AG04449 (cell line): ENCODE measurements at regions of chr6 and their contacts with region 1.

Region 1: GRCh38 chr6:143187238-143187923 is 126.7 kb downstream of the AIG1 start:
- DNase-seq: peak; percentile 92
- H3K4me3 ChIP-seq: no peak overlapping the region
- CTCF ChIP-seq: no peak

Region 2: DNA sequence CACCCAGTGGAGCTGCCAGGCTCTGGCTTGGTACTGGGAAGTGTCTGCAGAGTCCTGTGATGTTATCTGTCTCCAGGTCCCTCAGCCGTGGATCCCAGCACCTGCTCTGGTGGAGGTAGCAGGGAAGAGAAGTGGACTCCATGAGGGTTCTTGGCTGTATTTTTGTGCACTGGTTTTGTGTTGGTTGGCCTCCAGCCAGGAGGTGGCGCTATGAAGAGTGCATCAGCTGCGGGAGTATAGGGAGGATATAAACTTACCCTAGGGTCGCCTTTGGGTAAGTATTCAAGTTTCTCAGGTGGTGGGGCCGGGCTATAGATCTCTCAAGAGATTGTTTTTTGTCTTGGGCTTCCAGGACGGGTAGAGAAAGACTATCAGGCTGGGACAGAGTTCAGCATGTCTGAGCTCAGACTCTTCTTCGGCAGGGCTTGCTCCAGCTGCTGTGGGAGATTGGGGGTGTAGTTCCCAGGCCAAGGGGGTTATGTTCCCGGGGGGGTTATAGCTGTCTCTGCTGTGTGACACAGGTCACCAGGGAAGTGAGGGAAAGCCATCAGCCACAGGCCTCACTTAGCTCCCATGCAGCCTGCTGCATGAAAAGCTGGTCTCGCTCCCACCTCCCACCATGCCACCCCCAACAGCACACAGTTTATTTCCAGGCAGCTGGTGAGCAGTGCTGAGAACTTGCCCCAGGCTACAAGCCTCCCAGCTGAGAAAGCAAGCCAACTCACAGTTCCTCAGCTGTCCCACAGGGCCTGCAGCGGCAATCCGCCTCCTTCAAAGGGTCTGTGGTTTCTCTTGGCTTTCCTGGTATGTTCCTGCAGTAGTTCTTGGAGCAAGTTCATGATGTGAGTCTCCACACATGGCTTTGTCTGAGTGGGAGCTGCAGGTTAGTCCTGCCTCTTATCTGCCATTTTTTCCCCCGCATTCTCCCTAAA is 11.0 kb before region 1 on chr6:
- CTCF ChIA-PET with region 1: interaction called, 13 read pairs
- POLR2A ChIA-PET with region 1: interaction called, 8 read pairs
- DNase-seq: peak; percentile 94
- H3K4me3 ChIP-seq: no peak overlapping the region
- CTCF ChIP-seq: peak; percentile 16